ENCODE measurements at regions of chr2 and their contacts with region 1.

Region 1: GRCh38 chr2:233061591-233062450 is 1.7 kb downstream of the INPP5D start:
- DNase-seq: peak in 1 of 5 donors; percentile 69
- H3K4me3 ChIP-seq: peak overlapping the region; percentile 95 to 98
- H3K4me3 Mint-ChIP-seq: peak overlapping the region; percentile 87 to 97 (median 97)
- H3K27ac ChIP-seq: peak overlapping the region; percentile 91
- H3K27ac Mint-ChIP-seq: peak overlapping the region; percentile 91 to 99 (median 95)
- H3K4me1 ChIP-seq: peaks cover 57% of the 10 kb centered on the region
- H3K4me1 Mint-ChIP-seq: peaks cover 28 to 77% (median 50%) of the 10 kb centered on the region in 4 donors
- H3K27me3 ChIP-seq: no peaks in the 10 kb centered on the region
- H3K27me3 Mint-ChIP-seq: no peaks in the 10 kb centered on the region

Region 2: DNA sequence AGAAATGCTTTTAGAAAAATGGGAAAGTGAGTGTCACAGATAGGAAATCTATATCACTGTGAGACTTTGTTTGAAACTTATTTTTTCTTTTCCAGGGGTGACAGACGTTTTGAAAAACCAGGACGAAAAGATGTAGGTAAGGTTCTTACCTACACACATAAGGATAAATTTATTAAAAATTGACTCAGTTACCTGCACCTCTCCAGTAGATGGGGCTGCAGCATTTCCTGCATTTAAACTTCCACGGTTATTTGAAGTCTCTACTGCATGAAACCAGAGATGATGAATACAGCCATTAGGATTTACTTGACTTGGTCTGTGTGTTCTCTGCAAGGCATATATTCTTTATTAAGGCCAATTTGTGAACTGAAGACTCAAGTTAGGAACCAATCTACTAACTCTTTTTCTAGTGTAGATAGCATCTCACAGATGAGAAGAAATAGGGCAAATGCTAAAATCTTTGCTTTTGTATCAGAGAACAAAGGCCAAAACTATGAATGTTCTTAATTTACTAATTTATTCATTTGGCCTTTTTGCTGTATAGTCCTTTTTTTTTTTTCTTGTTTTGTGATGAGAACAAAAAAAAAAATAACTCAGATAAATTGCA is 300.4 kb before region 1 on chr2:
- CTCF ChIA-PET with region 1: no interaction called
- POLR2A ChIA-PET with region 1: no interaction called
- intact Hi-C with region 1: loop called (anchors 10 kb)
- DNase-seq: peak; percentile 33 to 50 (median 45)
- H3K4me3 ChIP-seq: no peak overlapping the region
- H3K4me3 Mint-ChIP-seq: no peak overlapping the region
- H3K27ac ChIP-seq: no peak overlapping the region
- H3K27ac Mint-ChIP-seq: no peak overlapping the region
- H3K4me1 ChIP-seq: peaks cover 16% of the 10 kb centered on the region
- H3K4me1 Mint-ChIP-seq: peaks cover 14 to 28% (median 21%) of the 10 kb centered on the region in 4 donors
- H3K27me3 ChIP-seq: no peaks in the 10 kb centered on the region
- H3K27me3 Mint-ChIP-seq: no peaks in the 10 kb centered on the region

Region 3: DNA sequence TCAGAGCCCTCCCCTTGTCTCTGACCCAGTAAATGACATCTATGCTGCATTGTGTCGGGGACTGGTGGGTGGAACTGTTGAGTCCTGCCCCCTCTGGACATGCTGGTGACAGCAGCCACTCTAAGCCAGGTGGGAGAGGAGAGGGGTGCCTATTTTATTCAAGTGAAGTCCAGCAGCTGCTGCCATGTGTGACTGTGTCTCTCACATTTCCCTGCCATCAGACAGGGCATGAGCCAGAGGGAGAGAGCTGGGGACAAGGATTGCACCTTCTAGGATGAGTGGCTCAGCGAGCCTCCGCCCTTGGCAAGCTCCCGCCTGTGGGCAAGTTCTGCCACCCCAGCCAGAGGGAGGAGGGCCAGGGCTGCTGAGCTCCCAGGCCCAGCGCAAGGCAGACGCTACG is 62.5 kb before region 1 on chr2:
- CTCF ChIA-PET with region 1: no interaction called
- POLR2A ChIA-PET with region 1: no interaction called
- intact Hi-C with region 1: no loop called
- DNase-seq: no peak
- H3K4me3 ChIP-seq: no peak overlapping the region
- H3K4me3 Mint-ChIP-seq: no peak overlapping the region
- H3K27ac ChIP-seq: no peak overlapping the region
- H3K27ac Mint-ChIP-seq: no peak overlapping the region
- H3K4me1 ChIP-seq: no peaks in the 10 kb centered on the region
- H3K4me1 Mint-ChIP-seq: no peaks in the 10 kb centered on the region
- H3K27me3 ChIP-seq: no peaks in the 10 kb centered on the region
- H3K27me3 Mint-ChIP-seq: peaks cover 0 to 5% of the 10 kb centered on the region in 2 donors

Region 4: GRCh38 chr2:233084488-233084887 is 22.7 kb after region 1 on chr2:
- CTCF ChIA-PET with region 1: interaction called, 40 read pairs
- POLR2A ChIA-PET with region 1: interaction called, 426 read pairs
- intact Hi-C with region 1: loop called (anchors 1 kb)
- DNase-seq: peak; percentile 55 to 87 (median 63)
- H3K4me3 ChIP-seq: no peak overlapping the region
- H3K4me3 Mint-ChIP-seq: peak overlapping the region; percentile 80 to 95 (median 84)
- H3K27ac ChIP-seq: peak overlapping the region; percentile 67
- H3K27ac Mint-ChIP-seq: peak overlapping the region in 6 of 7 donors; percentile 94 to 98 (median 97)
- H3K4me1 ChIP-seq: peaks cover 89% of the 10 kb centered on the region
- H3K4me1 Mint-ChIP-seq: peaks cover 73 to 99% (median 87%) of the 10 kb centered on the region in 4 donors
- H3K27me3 ChIP-seq: no peaks in the 10 kb centered on the region
- H3K27me3 Mint-ChIP-seq: peaks cover 0 to 1% of the 10 kb centered on the region in 2 donors

Region 5: DNA sequence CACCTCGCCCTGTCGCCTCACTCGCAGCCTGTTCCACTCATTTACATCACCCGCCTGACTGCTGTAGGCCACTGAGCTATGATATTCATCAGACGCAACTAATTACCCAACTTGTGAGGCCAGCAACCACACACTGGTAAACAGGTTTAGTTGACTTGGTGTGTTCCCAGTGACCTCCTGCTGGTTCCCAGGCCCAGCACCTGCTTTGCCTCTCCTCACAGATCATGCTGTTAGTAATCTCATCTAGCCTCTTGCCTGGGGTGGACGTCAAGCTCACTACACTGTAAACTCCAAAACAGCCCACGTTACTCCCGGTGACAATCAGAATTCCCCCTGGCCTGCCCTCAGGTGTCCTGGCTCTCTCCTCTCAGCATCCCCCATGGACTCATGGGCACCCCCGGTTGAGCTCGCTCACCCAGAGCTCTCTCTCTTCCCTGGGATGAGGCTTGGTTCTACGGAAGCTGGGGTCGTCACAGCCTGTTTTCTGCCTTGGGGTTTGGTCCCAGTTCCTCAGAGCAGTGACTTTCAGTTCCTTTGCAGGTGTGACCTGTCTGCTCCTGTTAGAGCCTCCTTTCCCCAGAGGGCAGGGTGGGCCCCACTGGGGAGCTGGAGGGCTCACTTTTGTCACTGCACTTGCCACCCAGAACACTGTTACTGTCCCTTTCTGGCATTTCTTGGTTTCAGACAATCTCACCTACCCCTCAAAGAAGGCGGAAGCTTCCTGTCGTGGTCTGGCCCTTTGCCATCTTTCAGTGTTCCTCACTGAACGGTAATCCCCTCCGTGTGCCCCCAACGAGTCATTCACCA is 38.6 kb after region 1 on chr2:
- CTCF ChIA-PET with region 1: interaction called, 19 read pairs
- POLR2A ChIA-PET with region 1: interaction called, 49 read pairs
- intact Hi-C with region 1: loop called (anchors 2 kb)
- DNase-seq: peak; percentile 49 to 82 (median 59)
- H3K4me3 ChIP-seq: no peak overlapping the region
- H3K4me3 Mint-ChIP-seq: peak overlapping the region; percentile 43 to 88 (median 76)
- H3K27ac ChIP-seq: peak overlapping the region; percentile 41
- H3K27ac Mint-ChIP-seq: peak overlapping the region; percentile 77 to 96 (median 87)
- H3K4me1 ChIP-seq: peaks cover 64% of the 10 kb centered on the region
- H3K4me1 Mint-ChIP-seq: peaks cover 50 to 84% (median 66%) of the 10 kb centered on the region in 4 donors
- H3K27me3 ChIP-seq: no peaks in the 10 kb centered on the region
- H3K27me3 Mint-ChIP-seq: no peaks in the 10 kb centered on the region

Region 6: DNA sequence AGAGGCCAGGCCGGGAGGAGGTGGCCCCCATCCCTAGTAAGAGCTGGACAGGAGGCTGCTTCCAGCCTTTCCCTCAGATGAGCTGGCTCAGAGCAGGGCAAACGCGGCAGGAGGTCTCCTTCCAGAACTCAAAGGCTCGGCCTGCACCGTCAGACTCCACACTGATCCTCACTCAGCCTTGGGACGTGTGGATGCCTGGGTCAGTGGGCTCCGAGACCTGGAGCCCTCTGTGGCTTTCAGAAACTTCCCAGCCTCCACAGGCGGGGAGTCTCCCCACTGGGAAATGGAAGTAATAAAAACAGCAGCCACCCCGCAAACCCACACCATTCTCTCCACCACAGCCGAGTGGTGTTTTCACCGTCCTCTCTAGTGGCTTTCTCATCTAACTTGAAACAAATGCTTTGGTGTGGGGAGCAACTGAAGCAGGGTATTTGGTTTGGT is 52.6 kb after region 1 on chr2:
- CTCF ChIA-PET with region 1: interaction called, 3 read pairs
- POLR2A ChIA-PET with region 1: interaction called, 14 read pairs
- intact Hi-C with region 1: no loop called
- DNase-seq: peak in 2 of 5 donors; percentile 15 to 23
- H3K4me3 ChIP-seq: no peak overlapping the region
- H3K4me3 Mint-ChIP-seq: peak overlapping the region in 4 of 8 donors; percentile 35 to 54 (median 47)
- H3K27ac ChIP-seq: no peak overlapping the region
- H3K27ac Mint-ChIP-seq: peak overlapping the region in 5 of 7 donors; percentile 8 to 71 (median 46)
- H3K4me1 ChIP-seq: peaks cover 38% of the 10 kb centered on the region
- H3K4me1 Mint-ChIP-seq: peaks cover 38 to 90% (median 67%) of the 10 kb centered on the region in 4 donors
- H3K27me3 ChIP-seq: no peaks in the 10 kb centered on the region
- H3K27me3 Mint-ChIP-seq: no peaks in the 10 kb centered on the region

Region 7: DNA sequence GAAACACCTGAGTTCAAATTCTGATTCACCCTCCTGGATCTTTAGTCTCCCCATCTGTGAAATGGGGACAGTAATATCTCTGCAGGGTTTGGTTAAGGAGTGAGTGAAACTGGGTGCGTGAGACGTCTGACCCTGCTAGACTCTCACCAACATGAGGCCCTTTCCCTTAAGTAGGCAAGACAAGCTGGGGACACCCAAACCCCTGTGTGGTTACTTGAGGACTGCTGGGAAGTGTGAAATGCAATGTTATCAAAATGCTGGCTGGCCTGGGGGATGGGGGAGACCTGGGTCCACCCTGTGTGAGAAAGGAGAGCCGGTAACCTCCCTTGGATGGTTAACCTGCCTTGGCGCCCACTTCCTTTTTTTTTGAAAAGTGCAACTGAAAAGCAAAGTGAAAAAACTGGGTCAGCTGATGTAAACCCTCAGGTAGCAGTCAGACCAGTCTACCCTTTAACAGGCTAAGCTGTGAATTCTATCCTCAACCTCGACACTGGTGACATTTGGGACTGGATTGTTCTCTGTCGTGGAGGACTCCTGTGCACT is 80.6 kb after region 1 on chr2:
- CTCF ChIA-PET with region 1: interaction called, 3 read pairs
- POLR2A ChIA-PET with region 1: interaction called, 5 read pairs
- intact Hi-C with region 1: loop called (anchors 5 kb)
- DNase-seq: peak; percentile 35 to 49 (median 43)
- H3K4me3 ChIP-seq: no peak overlapping the region
- H3K4me3 Mint-ChIP-seq: peak overlapping the region in 7 of 8 donors; percentile 47 to 74 (median 66)
- H3K27ac ChIP-seq: no peak overlapping the region
- H3K27ac Mint-ChIP-seq: peak overlapping the region; percentile 59 to 90 (median 86)
- H3K4me1 ChIP-seq: peaks cover 25% of the 10 kb centered on the region
- H3K4me1 Mint-ChIP-seq: peaks cover 34 to 46% (median 42%) of the 10 kb centered on the region in 4 donors
- H3K27me3 ChIP-seq: no peaks in the 10 kb centered on the region
- H3K27me3 Mint-ChIP-seq: no peaks in the 10 kb centered on the region

Region 8: GRCh38 chr2:233267516-233268245 is 205.9 kb after region 1 on chr2:
- CTCF ChIA-PET with region 1: interaction called, 3 read pairs
- POLR2A ChIA-PET with region 1: interaction called, 20 read pairs
- intact Hi-C with region 1: loop called (anchors 2 kb)
- DNase-seq: peak; percentile 90 to 96 (median 93)
- H3K4me3 ChIP-seq: peak overlapping the region in 1 of 2 donors; percentile 39
- H3K4me3 Mint-ChIP-seq: peak overlapping the region; percentile 52 to 89 (median 79)
- H3K27ac ChIP-seq: peak overlapping the region; percentile 81
- H3K27ac Mint-ChIP-seq: peak overlapping the region; percentile 96 to 99 (median 97)
- H3K4me1 ChIP-seq: peaks cover 68% of the 10 kb centered on the region
- H3K4me1 Mint-ChIP-seq: peaks cover 39 to 76% (median 64%) of the 10 kb centered on the region in 4 donors
- H3K27me3 ChIP-seq: no peaks in the 10 kb centered on the region
- H3K27me3 Mint-ChIP-seq: no peaks in the 10 kb centered on the region

Measured in CD4-positive, alpha-beta memory T cell (primary cell).